ENCODE measurements at regions of chr6 and their contacts with region 1.

Region 1: GRCh38 chr6:109411034-109411433 is 28.8 kb upstream of the CD164 start:
- DNase-seq: no peak
- H3K4me3 ChIP-seq: no peak overlapping the region
- H3K27ac ChIP-seq: no peak overlapping the region
- H3K4me1 ChIP-seq: no peaks in the 10 kb centered on the region
- H3K27me3 ChIP-seq: no peaks in the 10 kb centered on the region
- CTCF ChIP-seq: no peak
- EP300 ChIP-seq: no peak
- POLR2A ChIP-seq: no peak
- RAD21 ChIP-seq: no peak

Region 2: GRCh38 chr6:109397020-109397419 is 14.0 kb before region 1 on chr6:
- CTCF ChIA-PET with region 1: interaction called, 14 read pairs
- POLR2A ChIA-PET with region 1: no interaction called
- DNase-seq: no peak
- H3K4me3 ChIP-seq: no peak overlapping the region
- H3K27ac ChIP-seq: no peak overlapping the region
- H3K4me1 ChIP-seq: no peaks in the 10 kb centered on the region
- H3K27me3 ChIP-seq: no peaks in the 10 kb centered on the region
- CTCF ChIP-seq: peak in 2 of 3 experiments; percentile 29 to 30; a peak in 2 of 4 replicates
- EP300 ChIP-seq: no peak
- POLR2A ChIP-seq: no peak
- RAD21 ChIP-seq: peak; percentile 68 to 71

Region 3: GRCh38 chr6:109491207-109491938 is 80.3 kb after region 1 on chr6:
- CTCF ChIA-PET with region 1: no interaction called
- POLR2A ChIA-PET with region 1: no interaction called
- DNase-seq: no peak
- H3K4me3 ChIP-seq: peak overlapping the region in 1 of 4 experiments; percentile 10; a peak in 1 of 8 replicates
- H3K27ac ChIP-seq: 0 out of 2 replicates have a peak overlapping the region, but pooled peaks have one; percentile 16
- H3K4me1 ChIP-seq: peaks cover 3 to 23% (median 18%) of the 10 kb centered on the region in 4 experiments
- H3K27me3 ChIP-seq: no peaks in the 10 kb centered on the region
- CTCF ChIP-seq: no peak
- EP300 ChIP-seq: no peak
- POLR2A ChIP-seq: no peak
- RAD21 ChIP-seq: no peak

Measured in H1 (cell line).